ENCODE measurements at regions of chr2 and their contacts with region 1.

Region 1: DNA sequence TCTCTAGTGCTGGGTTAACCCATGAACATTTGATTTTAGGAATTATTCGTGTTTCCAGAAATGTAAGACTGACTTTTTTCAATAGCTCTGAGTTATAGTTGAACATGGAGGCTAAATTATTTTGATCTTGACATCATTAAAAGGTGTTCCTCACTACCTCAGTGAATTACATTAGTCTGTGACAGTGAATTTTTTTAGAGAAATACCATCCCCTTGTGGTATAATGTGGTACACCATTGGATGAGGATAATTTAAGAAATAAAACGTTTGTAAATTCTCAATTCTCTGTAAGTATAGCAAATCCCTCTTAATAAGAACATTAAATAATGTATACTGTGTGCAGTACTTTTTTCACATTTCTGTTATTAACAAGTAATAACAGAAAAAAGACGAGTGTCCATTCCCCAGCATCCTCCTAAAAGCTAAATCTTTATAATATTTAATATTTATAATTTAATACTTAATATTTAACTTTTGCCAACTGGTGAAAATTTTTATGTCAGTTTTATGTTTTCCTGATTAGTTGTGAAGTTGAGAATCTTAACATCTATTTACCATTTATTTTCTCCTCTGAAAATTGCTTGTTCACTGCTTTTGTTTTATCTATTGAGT is 70.3 kb upstream of the CWC22 start:
- DNase-seq: peak; percentile 22
- ATAC-seq: peak; percentile 77
- H3K4me3 ChIP-seq: no peak overlapping the region
- H3K27ac ChIP-seq: no peak overlapping the region
- H3K4me1 ChIP-seq: no peaks in the 10 kb centered on the region
- H3K27me3 ChIP-seq: no peaks in the 10 kb centered on the region; the same call in 1 of the 2 replicates
- CTCF ChIP-seq: peak; percentile 80
- POLR2A ChIP-seq: no peak
- RAD21 ChIP-seq: peak; percentile 79

Region 2: DNA sequence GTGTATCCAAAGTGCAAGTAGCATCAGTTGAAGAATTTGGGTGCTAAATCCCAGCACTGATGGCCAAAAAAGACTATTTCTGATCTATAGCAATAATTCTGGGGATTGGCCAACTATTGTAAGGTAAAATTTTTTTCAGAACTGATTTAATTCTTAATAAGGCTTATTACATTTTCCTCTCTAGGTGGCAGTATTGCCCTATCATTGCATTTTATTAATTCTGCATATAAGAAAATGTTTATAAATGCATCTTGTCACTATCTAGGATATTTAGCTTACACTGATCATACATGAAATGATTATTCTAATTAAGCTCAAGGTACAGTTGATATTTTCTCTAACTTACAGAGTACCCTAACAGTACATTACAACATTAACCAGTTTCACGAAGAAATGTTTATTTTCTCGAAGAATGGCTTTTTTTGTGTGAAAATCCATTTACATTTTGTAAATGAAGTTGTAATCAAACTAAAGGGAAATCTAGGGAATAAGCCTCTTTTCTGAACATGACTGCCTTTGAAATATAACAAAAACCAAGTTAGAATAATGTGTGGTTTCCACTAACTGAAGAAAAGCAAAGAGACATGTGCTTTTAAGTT is 1281.2 kb before region 1 on chr2:
- CTCF ChIA-PET with region 1: no interaction called
- POLR2A ChIA-PET with region 1: no interaction called
- dilution Hi-C with region 1: no loop called
- in situ Hi-C with region 1: no loop called
- intact Hi-C with region 1: loop called (anchors 5 kb)
- DNase-seq: peak; percentile 50
- ATAC-seq: no peak
- H3K4me3 ChIP-seq: no peak overlapping the region
- H3K27ac ChIP-seq: no peak overlapping the region
- H3K4me1 ChIP-seq: no peaks in the 10 kb centered on the region
- H3K27me3 ChIP-seq: no peaks in the 10 kb centered on the region; the same call in 1 of the 2 replicates
- CTCF ChIP-seq: peak; percentile 65
- POLR2A ChIP-seq: no peak
- RAD21 ChIP-seq: peak; percentile 67

Region 3: GRCh38 chr2:179422037-179422643 is 655.3 kb before region 1 on chr2:
- CTCF ChIA-PET with region 1: no interaction called
- POLR2A ChIA-PET with region 1: no interaction called
- dilution Hi-C with region 1: no loop called
- in situ Hi-C with region 1: loop called (anchors 25 kb)
- intact Hi-C with region 1: loop called (anchors 5 kb)
- DNase-seq: peak; percentile 77
- ATAC-seq: peak; percentile 89
- H3K4me3 ChIP-seq: no peak overlapping the region
- H3K27ac ChIP-seq: no peak overlapping the region
- H3K4me1 ChIP-seq: no peaks in the 10 kb centered on the region
- H3K27me3 ChIP-seq: no peaks in the 10 kb centered on the region
- CTCF ChIP-seq: peak; percentile 89
- POLR2A ChIP-seq: no peak
- RAD21 ChIP-seq: peak; percentile 93

Region 4: GRCh38 chr2:179513181-179513580 is 564.2 kb before region 1 on chr2:
- CTCF ChIA-PET with region 1: interaction called, 12 read pairs
- POLR2A ChIA-PET with region 1: no interaction called
- dilution Hi-C with region 1: no loop called
- in situ Hi-C with region 1: no loop called
- intact Hi-C with region 1: no loop called
- DNase-seq: peak; percentile 2
- ATAC-seq: no peak
- H3K4me3 ChIP-seq: no peak overlapping the region
- H3K27ac ChIP-seq: no peak overlapping the region
- H3K4me1 ChIP-seq: no peaks in the 10 kb centered on the region
- H3K27me3 ChIP-seq: no peaks in the 10 kb centered on the region
- CTCF ChIP-seq: no peak
- POLR2A ChIP-seq: no peak
- RAD21 ChIP-seq: no peak

Region 5: DNA sequence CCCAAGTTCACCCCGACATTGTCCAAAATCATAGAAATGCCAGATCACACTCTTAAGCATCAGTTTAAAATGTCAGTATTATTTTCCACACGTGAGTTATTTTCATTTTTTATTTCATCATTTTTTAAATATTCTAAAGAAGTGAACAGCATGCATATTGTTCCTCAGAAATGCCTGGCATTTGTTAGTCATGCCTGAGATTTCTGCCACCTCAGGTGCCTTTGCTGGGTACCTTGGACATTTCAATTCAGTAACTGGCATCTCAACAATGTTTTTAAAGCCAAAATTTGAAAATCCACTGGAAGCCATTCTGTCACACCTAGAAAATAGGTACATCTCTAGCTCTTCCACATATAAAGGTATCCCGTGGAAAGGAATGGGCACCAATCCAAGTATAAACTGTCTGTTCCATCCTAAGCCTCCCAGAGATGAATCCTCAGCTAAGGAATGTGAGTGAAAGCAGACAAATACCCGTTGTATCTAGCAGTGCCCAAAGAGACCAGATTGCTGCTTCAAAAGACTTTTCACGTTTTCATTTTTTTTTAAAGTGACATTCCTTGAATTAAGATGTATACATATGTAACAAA is 375.8 kb before region 1 on chr2:
- CTCF ChIA-PET with region 1: no interaction called
- POLR2A ChIA-PET with region 1: no interaction called
- dilution Hi-C with region 1: no loop called
- in situ Hi-C with region 1: no loop called
- intact Hi-C with region 1: no loop called
- DNase-seq: peak; percentile 45
- ATAC-seq: peak; percentile 51; the same call in 1 of the 2 replicates
- H3K4me3 ChIP-seq: no peak overlapping the region
- H3K27ac ChIP-seq: no peak overlapping the region
- H3K4me1 ChIP-seq: peaks cover 2% of the 10 kb centered on the region; the same call in 1 of the 2 replicates
- H3K27me3 ChIP-seq: no peaks in the 10 kb centered on the region; the same call in 1 of the 2 replicates
- CTCF ChIP-seq: no peak
- POLR2A ChIP-seq: no peak
- RAD21 ChIP-seq: no peak

Region 6: DNA sequence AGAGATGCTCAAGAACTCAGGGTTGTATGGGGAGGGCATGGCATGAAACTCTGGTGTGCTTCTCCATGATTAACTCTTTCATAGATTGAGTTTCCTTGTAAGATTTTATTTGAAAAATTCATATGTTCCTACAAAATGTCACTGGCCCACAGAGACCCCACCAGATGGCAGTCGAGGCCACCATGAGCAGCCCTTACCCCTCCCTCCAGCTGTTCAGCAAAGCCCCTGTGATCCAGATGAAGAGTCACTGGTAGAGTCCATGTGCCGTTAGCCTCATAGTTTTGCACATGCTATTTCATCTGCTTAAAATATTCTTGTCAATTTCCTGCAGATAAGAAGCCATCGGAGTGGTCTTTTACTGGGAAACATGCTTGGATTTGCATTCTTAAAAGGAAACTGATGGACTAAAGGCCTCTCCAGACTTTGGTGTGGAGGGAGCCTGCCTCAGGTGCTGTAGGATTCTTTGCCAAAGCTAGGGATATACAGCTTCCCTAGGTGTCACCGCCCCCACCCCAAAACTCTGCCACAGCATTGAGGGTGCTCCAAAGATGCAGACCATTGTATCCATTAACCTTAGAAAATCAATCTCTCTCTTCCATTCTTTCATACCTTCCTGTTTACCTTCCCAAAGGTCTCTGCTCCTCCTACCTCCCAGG is 234.8 kb before region 1 on chr2:
- CTCF ChIA-PET with region 1: no interaction called
- POLR2A ChIA-PET with region 1: no interaction called
- dilution Hi-C with region 1: no loop called
- in situ Hi-C with region 1: no loop called
- intact Hi-C with region 1: loop called (anchors 2 kb)
- DNase-seq: no peak
- ATAC-seq: no peak
- H3K4me3 ChIP-seq: no peak overlapping the region
- H3K27ac ChIP-seq: no peak overlapping the region
- H3K4me1 ChIP-seq: no peaks in the 10 kb centered on the region
- H3K27me3 ChIP-seq: peaks cover 6% of the 10 kb centered on the region
- CTCF ChIP-seq: no peak; the same call in 1 of the 2 replicates
- POLR2A ChIP-seq: no peak
- RAD21 ChIP-seq: peak; percentile 30; the same call in 1 of the 2 replicates

Region 7: GRCh38 chr2:179981085-179981484 is 96.3 kb before region 1 on chr2:
- CTCF ChIA-PET with region 1: interaction called, 4 read pairs
- POLR2A ChIA-PET with region 1: no interaction called
- dilution Hi-C with region 1: no loop called
- in situ Hi-C with region 1: no loop called
- intact Hi-C with region 1: loop called (anchors 2 kb)
- DNase-seq: peak; percentile 72
- ATAC-seq: peak; percentile 91
- H3K4me3 ChIP-seq: no peak overlapping the region
- H3K27ac ChIP-seq: no peak overlapping the region
- H3K4me1 ChIP-seq: peaks cover 2% of the 10 kb centered on the region
- H3K27me3 ChIP-seq: no peaks in the 10 kb centered on the region
- CTCF ChIP-seq: no peak
- POLR2A ChIP-seq: no peak
- RAD21 ChIP-seq: no peak

Region 8: DNA sequence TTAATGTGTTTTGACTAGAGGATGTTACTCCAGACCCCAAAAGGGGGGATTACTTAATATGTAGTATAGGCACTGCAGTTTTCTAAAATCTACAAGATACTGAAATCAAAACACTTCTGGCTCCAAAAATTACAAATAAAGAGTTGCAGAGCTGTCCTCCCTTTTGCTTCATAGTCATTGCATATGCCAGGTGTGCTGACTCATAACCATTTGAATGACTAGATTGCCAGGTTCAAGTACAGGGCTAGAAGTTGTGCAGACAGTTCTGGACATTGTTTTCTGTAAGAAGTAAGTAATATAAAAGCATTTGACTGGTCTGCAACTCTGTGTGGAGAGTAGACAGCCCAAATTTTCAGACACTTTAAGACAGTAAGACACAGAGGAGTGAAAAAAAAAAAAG is 77.0 kb before region 1 on chr2:
- CTCF ChIA-PET with region 1: no interaction called
- POLR2A ChIA-PET with region 1: no interaction called
- dilution Hi-C with region 1: no loop called
- in situ Hi-C with region 1: no loop called
- intact Hi-C with region 1: loop called (anchors 5 kb)
- DNase-seq: peak; percentile 36
- ATAC-seq: no peak
- H3K4me3 ChIP-seq: no peak overlapping the region
- H3K27ac ChIP-seq: no peak overlapping the region
- H3K4me1 ChIP-seq: no peaks in the 10 kb centered on the region
- H3K27me3 ChIP-seq: no peaks in the 10 kb centered on the region
- CTCF ChIP-seq: no peak
- POLR2A ChIP-seq: no peak
- RAD21 ChIP-seq: no peak

Measured in IMR-90 (cell line).